Naive thymus-derived CD4-positive, alpha-beta T cell (primary cell): ENCODE measurements at regions of chr4 and their contacts with region 1.

Region 1: DNA sequence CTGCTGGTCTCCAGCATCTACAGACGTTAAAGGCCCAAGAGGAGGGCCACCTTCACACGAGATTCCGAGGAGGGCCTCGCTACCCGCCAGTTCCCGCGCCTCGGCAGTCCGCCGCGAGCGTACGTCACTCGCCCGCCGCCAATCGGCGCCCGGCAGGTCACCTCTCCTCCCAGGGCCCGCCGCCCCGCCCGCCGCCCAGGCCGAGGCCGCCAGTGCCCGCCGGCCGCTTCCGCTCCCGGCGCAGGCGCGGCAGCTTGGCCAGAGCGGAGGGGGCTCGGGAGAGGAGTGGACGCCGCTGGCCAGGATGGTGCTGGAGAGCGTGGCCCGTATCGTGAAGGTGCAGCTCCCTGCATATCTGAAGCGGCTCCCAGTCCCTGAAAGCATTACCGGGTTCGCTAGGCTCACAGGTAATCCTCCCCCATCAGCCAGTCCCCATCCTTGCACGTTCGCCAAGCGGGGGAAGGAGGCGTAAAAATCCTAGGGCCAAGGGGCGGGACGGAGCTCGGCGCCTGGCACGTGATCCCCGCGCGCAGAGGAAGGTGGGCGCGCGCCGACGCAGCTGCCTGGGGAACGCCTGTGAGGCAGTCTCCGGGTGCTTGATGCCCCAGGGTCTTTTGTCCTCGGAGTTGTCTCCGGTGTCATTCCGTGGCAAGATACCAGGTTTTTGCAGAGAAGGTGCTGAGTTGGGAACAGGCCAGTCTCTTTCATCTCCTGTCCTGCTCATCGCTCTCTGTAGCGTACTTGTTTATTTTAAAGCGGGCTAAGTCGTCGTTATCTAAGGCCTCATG is at the start of gene CISD2:
- DNase-seq: peak; percentile 87 to 95 (median 92)
- ATAC-seq: peak; percentile 90
- H3K4me3 ChIP-seq: peak within 1 kb of the TSS; percentile 95
- H3K4me3 Mint-ChIP-seq: peak within 1 kb of the TSS; percentile 88 to 100 (median 96)
- H3K27ac ChIP-seq: peak within 1 kb of the TSS; percentile 99
- H3K27ac Mint-ChIP-seq: peak within 1 kb of the TSS; percentile 98 to 100 (median 99)
- H3K4me1 ChIP-seq: peaks cover 16 to 28% of the 10 kb centered on the region in 2 donors
- H3K4me1 Mint-ChIP-seq: peaks cover 32 to 80% (median 71%) of the 10 kb centered on the region in 7 donors
- H3K27me3 ChIP-seq: no peaks in the 10 kb centered on the region
- H3K27me3 Mint-ChIP-seq: no peaks in the 10 kb centered on the region
- total RNA-seq, gene CISD2: 11.4 to 50.3 (median 13.4) TPM

Region 2: DNA sequence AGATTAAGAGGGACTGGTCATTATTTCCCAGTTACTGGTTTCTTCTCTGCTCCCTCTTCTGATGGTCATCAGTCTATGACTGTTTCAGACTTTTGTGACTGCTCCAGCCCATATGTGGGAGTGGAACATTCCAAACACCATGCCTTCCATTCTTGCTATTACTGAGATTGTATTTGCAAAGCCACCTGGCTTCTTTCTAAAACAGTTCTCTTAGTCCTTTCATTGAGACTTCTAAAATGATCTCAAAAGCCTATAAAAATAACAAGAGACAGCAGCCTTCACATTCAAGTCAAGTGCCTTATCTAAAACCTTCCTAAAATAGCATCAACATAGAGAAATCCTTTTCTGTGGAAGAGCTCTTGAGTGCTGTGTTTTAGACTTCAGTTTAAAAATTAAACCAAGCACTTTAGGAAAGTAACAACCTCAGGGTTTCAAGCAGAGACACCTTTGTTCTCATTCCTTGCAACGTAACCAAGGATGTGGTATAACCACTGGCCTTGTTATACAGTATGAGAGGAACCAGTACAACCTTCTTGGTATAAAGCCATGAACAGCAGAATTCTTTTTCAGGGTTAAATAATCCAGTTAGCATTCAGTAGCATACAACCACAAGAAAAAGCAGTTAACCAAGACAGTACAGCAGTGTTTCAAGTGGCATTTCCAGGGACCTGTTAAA is 270.8 kb before region 1 on chr4:
- CTCF ChIA-PET with region 1: no interaction called
- POLR2A ChIA-PET with region 1: no interaction called
- intact Hi-C with region 1: loop called in 1 of 2 experiments (anchors 5 kb)
- DNase-seq: peak in 7 of 9 donors; percentile 56 to 87 (median 79)
- ATAC-seq: peak; percentile 95
- H3K4me3 ChIP-seq: no peak overlapping the region
- H3K4me3 Mint-ChIP-seq: peak overlapping the region; percentile 8 to 86 (median 54)
- H3K27ac ChIP-seq: peak overlapping the region; percentile 51
- H3K27ac Mint-ChIP-seq: peak overlapping the region; percentile 78 to 94 (median 86)
- H3K4me1 ChIP-seq: peaks cover 27 to 45% of the 10 kb centered on the region in 2 donors
- H3K4me1 Mint-ChIP-seq: peaks cover 31 to 86% (median 74%) of the 10 kb centered on the region in 7 donors
- H3K27me3 ChIP-seq: no peaks in the 10 kb centered on the region
- H3K27me3 Mint-ChIP-seq: no peaks in the 10 kb centered on the region

Region 3: GRCh38 chr4:102792361-102792936 is 76.5 kb before region 1 on chr4:
- CTCF ChIA-PET with region 1: no interaction called
- POLR2A ChIA-PET with region 1: no interaction called
- intact Hi-C with region 1: loop called in 1 of 2 experiments (anchors 2 kb)
- DNase-seq: no peak
- ATAC-seq: peak; percentile 41
- H3K4me3 ChIP-seq: no peak overlapping the region
- H3K4me3 Mint-ChIP-seq: no peak overlapping the region
- H3K27ac ChIP-seq: no peak overlapping the region
- H3K27ac Mint-ChIP-seq: peak overlapping the region in 6 of 9 donors; percentile 6 to 48 (median 28)
- H3K4me1 ChIP-seq: no peaks in the 10 kb centered on the region
- H3K4me1 Mint-ChIP-seq: peaks cover 8 to 27% (median 19%) of the 10 kb centered on the region in 7 donors
- H3K27me3 ChIP-seq: no peaks in the 10 kb centered on the region
- H3K27me3 Mint-ChIP-seq: no peaks in the 10 kb centered on the region

Region 4: DNA sequence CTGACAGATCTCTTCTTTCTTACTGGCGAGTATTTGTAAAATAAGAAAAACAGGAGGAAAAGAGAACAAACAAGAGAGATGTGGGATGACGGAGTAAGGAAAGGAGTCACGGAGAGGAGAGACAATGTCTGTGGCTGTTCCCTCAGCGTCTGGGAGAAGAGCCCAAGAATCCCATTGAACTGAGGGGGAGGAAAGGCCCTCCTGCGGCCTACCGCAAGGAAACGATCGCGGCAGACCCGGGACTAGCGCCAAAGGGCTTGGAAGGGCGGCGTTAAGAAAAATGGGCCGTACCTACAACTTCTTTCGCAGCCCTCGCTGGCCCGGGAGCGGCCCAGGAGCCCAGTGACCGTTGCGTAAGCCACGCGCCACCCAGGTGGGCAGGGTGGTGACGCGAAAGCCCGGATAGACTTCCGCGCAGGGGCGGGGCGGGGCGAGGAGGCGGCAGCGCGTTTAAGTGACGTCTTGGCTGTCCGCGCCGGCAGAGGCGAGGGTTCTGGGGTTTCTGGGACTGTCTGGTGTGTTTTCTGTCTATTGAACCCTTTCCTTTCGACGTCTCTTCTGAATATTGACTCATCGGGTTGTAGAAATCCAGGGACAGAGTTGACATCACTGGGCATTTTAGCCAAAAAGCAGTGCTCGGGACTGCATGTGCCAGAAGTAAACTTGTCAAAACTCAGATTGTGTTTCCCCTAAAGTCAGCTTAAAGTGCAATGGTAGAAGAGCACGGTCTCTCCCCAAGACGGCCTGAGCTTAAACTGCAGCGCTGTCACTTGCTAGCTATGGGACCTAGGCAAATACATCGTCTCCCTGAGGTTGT is 150.5 kb after region 1 on chr4 and contains the start of gene SLC9B1:
- CTCF ChIA-PET with region 1: no interaction called
- POLR2A ChIA-PET with region 1: interaction called, 8 read pairs
- intact Hi-C with region 1: loop called (anchors 1 kb)
- DNase-seq: peak; percentile 87 to 95 (median 92)
- ATAC-seq: peak; percentile 98
- H3K4me3 ChIP-seq: peak within 1 kb of the TSS; percentile 48
- H3K4me3 Mint-ChIP-seq: peak within 1 kb of the TSS; percentile 84 to 98 (median 93)
- H3K27ac ChIP-seq: peak within 1 kb of the TSS; percentile 80
- H3K27ac Mint-ChIP-seq: peak within 1 kb of the TSS in 6 of 9 donors; percentile 96 to 99 (median 98)
- H3K4me1 ChIP-seq: peaks cover 13 to 14% of the 10 kb centered on the region in 2 donors
- H3K4me1 Mint-ChIP-seq: peaks cover 0 to 29% (median 20%) of the 10 kb centered on the region in 7 donors
- H3K27me3 ChIP-seq: no peaks in the 10 kb centered on the region
- H3K27me3 Mint-ChIP-seq: no peaks in the 10 kb centered on the region
- total RNA-seq, gene SLC9B1: 1.4 to 7.2 (median 3.9) TPM

Region 5: DNA sequence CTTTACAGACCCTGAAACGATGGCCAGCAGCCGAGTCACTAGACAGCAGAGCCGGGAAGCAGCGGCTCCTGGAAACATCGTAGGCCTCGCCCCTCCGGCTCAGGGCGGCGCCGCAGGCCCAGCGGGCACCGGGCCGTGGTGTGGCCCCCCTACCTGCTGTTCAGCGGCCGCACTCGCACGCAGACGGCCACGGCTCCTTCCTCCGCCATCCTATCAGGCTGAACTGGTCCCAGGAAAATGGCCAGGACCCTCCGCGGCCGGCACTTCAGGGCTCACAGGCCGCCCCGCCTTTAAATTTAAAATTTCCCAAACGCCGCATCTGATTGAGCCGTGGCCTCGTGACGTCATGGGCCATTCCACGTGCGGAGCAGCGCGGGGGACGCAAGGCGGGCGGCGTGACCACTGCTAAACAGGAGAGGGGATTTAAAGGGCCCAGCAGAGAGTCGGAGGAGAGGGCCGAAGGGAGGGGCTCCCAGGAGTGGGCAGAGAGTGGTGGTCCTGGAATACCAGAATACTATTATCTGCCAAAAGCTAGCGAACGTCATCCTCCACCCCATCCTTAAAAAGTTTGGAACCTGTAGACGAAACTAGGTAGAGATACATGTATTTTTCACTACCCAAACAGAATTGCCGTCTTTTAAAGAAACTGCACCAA is 329.3 kb after region 1 on chr4 and contains the start of gene CENPE:
- CTCF ChIA-PET with region 1: no interaction called
- POLR2A ChIA-PET with region 1: interaction called, 3 read pairs
- intact Hi-C with region 1: loop called (anchors 1 to 2 kb)
- DNase-seq: peak; percentile 77 to 90 (median 87)
- ATAC-seq: peak; percentile 93
- H3K4me3 ChIP-seq: peak within 1 kb of the TSS; percentile 95
- H3K4me3 Mint-ChIP-seq: peak within 1 kb of the TSS; percentile 81 to 99 (median 96)
- H3K27ac ChIP-seq: peak within 1 kb of the TSS; percentile 91
- H3K27ac Mint-ChIP-seq: peak within 1 kb of the TSS; percentile 87 to 100 (median 99)
- H3K4me1 ChIP-seq: peaks cover 0 to 6% of the 10 kb centered on the region in 2 donors
- H3K4me1 Mint-ChIP-seq: peaks cover 6 to 29% (median 10%) of the 10 kb centered on the region in 7 donors
- H3K27me3 ChIP-seq: no peaks in the 10 kb centered on the region
- H3K27me3 Mint-ChIP-seq: peaks cover 0 to 21% (median 7%) of the 10 kb centered on the region in 5 donors
- total RNA-seq, gene CENPE: 1.1 to 35.8 (median 1.5) TPM